Activated CD4-positive, alpha-beta T cell treated with anti-CD3 and anti-CD28 coated beads for 36 hours (primary cell): ENCODE measurements at regions of chr19 and their contacts with region 1.

Region 1: GRCh38 chr19:42199440-42200115 is 17.9 kb downstream of the DEDD2 start:
- DNase-seq: peak; percentile 83
- ATAC-seq: peak; percentile 69
- H3K4me3 Mint-ChIP-seq: peak overlapping the region; percentile 57
- H3K27ac Mint-ChIP-seq: peak overlapping the region; percentile 91
- H3K4me1 Mint-ChIP-seq: peaks cover 81% of the 10 kb centered on the region
- H3K27me3 Mint-ChIP-seq: no peaks in the 10 kb centered on the region

Region 2: GRCh38 chr19:41276231-41276630 is 923.3 kb before region 1 on chr19:
- CTCF ChIA-PET with region 1: no interaction called
- POLR2A ChIA-PET with region 1: no interaction called
- intact Hi-C with region 1: no loop called
- DNase-seq: no peak
- ATAC-seq: no peak
- H3K4me3 Mint-ChIP-seq: no peak overlapping the region
- H3K27ac Mint-ChIP-seq: peak overlapping the region; percentile 4
- H3K4me1 Mint-ChIP-seq: no peaks in the 10 kb centered on the region
- H3K27me3 Mint-ChIP-seq: no peaks in the 10 kb centered on the region

Region 3: DNA sequence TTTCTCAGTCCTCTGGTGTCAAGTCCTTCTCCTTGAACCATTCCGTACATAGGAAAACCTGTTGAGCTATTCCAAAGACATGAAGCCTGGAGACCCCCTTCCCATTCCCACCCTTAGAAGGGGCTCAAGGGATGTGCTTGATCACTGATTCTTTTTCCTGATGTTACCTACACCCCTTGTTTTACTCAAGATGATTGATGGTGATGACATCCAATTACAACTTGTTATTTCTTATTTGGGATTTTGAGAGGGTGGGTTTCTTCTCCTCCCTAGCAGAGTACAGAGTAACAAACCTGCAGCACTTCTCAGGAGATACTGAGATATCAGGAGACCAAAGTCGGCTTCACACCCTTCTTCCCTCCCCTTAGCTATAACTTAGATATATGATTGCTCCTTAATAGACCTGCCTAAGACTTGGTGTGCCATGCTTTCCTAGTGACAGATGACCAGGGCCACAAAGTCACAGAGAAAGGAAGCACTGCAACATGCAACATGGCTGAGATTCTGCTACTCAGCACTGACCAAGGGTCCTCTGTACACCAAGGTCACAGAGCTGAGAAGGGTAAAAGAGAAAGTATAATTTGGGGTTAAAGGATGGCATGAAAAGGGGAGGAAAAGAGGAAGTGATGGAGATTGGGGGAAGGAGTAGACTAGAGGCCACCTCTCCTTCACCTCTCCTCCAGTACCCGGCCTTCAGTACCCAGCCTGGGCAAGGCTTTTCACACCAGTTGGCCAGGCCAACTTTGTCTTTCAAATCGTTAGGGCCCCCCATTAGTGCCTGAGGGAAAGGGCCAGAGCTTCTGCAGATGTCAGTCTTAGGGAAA is 346.0 kb before region 1 on chr19:
- CTCF ChIA-PET with region 1: no interaction called
- POLR2A ChIA-PET with region 1: interaction called, 10 read pairs
- intact Hi-C with region 1: no loop called
- DNase-seq: no peak
- ATAC-seq: no peak
- H3K4me3 Mint-ChIP-seq: no peak overlapping the region
- H3K27ac Mint-ChIP-seq: no peak overlapping the region
- H3K4me1 Mint-ChIP-seq: peaks cover 6% of the 10 kb centered on the region
- H3K27me3 Mint-ChIP-seq: peaks cover 4% of the 10 kb centered on the region

Region 4: DNA sequence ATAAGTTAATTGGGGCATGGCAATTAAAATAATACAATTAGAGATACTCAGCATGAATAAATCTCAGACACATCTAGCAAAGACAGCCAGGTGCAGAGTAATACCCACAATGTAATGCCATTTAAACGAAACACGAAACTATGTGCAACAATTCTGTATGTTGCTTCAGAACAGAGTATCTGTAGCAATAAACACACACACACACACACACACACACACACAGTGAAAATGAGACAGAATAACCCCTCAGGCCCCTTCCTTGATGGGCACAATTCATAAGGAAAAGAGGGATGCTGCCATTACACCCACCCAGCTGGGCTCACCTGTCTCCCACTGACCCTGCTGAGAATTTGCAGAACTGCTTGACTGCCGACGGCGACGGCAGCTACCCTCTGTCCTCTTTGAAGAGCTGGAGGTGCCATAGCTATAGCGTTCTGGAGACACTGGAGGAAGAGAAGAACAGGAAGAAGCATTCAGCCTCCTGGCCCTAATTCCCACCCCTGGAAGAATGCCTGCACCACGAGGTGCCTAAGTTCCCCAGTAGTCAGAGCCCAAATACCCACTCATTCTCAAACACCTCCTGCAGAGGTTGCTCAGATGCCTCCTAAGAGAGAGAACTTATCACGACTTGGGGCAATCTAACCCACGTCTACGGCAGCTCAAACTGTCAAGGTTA is 15.4 kb after region 1 on chr19:
- CTCF ChIA-PET with region 1: interaction called, 12 read pairs
- POLR2A ChIA-PET with region 1: no interaction called
- intact Hi-C with region 1: loop called in 1 of 2 experiments (anchors 1 kb)
- DNase-seq: no peak
- ATAC-seq: no peak
- H3K4me3 Mint-ChIP-seq: peak overlapping the region; percentile 85
- H3K27ac Mint-ChIP-seq: peak overlapping the region; percentile 27
- H3K4me1 Mint-ChIP-seq: peaks cover 60% of the 10 kb centered on the region
- H3K27me3 Mint-ChIP-seq: no peaks in the 10 kb centered on the region

Region 5: DNA sequence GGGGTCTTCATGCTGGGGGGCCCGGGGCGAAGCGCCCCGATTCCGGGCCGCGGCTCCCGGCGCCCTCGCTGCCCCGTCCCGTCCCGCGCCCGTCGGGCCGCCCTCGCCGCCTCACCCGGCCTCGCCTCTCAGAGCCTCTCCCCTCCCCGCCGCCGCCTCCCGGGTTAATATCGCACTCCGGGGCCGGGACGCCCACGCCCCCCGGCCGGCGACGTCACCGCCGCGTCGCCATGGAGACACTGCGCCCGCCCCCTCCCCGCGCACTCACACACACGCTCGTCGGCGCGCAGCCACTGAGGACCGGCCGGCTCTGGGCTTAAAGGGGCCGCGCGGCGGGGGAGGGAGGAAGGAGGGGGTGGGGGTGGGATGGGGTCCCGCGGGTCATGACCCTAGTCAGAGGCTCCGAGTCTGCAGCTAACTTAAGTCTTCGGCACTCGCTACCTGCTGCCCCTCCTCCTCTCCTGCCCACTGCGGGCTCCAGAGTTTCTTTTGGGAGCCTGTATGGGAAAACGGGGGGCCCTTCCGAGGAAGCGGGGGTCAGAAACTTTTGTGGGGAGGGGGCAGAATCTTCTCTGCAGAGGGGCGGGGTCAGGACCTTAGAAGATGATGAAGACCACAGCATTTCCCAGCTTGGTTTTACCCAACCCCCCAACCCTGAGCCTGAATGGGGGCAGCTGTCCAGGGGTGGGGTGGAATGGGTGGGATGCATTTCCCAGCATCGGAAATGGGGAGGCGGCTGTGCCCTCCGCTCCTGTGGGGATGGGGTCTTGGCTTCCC is 55.6 kb after region 1 on chr19 and contains the start of gene ERF:
- CTCF ChIA-PET with region 1: no interaction called
- POLR2A ChIA-PET with region 1: no interaction called
- intact Hi-C with region 1: no loop called
- DNase-seq: peak; percentile 97
- ATAC-seq: peak; percentile 73
- H3K4me3 Mint-ChIP-seq: peak within 1 kb of the TSS; percentile 70
- H3K27ac Mint-ChIP-seq: peak within 1 kb of the TSS; percentile 63
- H3K4me1 Mint-ChIP-seq: peaks cover 25% of the 10 kb centered on the region
- H3K27me3 Mint-ChIP-seq: peaks cover 3% of the 10 kb centered on the region
- total RNA-seq, gene ERF: 65.5 to 66.4 TPM